ENCODE measurements at regions of chr3 and their contacts with region 1.

Region 1: DNA sequence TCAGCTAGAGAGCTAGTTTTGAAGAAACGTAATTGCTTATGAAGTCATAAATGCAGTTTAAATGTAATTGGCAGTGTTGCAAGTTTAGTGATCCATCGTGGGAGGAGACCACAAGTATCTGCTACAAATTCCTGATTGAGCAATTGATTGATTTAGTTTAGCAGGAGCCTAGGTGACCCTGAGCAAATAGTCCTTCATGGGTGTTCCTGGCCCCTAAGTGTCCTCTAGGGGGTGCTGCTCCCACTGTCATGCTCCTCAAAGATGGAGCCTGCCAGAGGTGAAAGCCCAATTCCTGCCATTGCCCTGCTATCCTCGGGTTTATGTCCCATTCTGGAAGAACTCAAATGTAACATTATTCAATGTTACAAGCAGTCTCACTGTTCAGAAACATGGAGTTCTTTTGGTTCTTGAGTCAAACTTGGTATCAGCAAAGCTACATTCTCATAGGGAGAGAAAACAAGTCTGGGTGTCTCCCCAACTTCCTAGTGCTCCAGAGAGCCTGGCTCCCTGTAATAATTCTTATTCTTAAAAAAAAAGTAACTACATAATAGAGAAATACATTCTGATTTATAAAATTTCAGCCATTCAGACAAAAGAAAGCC is 29.8 kb upstream of the SENP5 start:
- DNase-seq: peak; percentile 65 to 86 (median 75)
- H3K4me3 ChIP-seq: no peak overlapping the region
- H3K27ac ChIP-seq: no peak overlapping the region
- H3K4me1 ChIP-seq: no peaks in the 10 kb centered on the region
- H3K27me3 ChIP-seq: no peaks in the 10 kb centered on the region
- CTCF ChIP-seq: peak; percentile 57 to 78 (median 72)
- POLR2A ChIP-seq: no peak

Region 2: DNA sequence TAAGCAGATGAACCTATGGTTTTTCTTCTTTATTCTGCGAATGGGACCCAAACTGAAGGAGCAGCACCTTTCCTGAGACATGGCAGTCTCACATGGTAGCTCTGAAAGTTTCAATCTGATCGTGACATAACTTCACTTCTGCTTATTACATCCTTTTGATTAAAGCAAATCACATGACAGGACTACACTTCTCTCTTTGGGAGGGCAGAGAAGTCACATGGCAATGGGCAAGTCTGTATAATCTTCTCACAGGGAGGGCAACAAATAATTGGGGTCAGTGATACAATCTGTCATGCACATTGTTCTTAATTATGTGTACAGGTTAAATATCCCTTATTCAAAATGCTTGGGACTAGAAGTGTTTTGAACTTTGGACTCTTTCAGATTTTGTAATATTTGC is 82.8 kb after region 1 on chr3:
- intact Hi-C with region 1: no loop called
- DNase-seq: no peak
- H3K4me3 ChIP-seq: no peak overlapping the region
- H3K27ac ChIP-seq: no peak overlapping the region
- H3K4me1 ChIP-seq: peaks cover 0 to 4% of the 10 kb centered on the region in 2 donors
- H3K27me3 ChIP-seq: no peaks in the 10 kb centered on the region
- CTCF ChIP-seq: no peak
- POLR2A ChIP-seq: no peak

Region 3: DNA sequence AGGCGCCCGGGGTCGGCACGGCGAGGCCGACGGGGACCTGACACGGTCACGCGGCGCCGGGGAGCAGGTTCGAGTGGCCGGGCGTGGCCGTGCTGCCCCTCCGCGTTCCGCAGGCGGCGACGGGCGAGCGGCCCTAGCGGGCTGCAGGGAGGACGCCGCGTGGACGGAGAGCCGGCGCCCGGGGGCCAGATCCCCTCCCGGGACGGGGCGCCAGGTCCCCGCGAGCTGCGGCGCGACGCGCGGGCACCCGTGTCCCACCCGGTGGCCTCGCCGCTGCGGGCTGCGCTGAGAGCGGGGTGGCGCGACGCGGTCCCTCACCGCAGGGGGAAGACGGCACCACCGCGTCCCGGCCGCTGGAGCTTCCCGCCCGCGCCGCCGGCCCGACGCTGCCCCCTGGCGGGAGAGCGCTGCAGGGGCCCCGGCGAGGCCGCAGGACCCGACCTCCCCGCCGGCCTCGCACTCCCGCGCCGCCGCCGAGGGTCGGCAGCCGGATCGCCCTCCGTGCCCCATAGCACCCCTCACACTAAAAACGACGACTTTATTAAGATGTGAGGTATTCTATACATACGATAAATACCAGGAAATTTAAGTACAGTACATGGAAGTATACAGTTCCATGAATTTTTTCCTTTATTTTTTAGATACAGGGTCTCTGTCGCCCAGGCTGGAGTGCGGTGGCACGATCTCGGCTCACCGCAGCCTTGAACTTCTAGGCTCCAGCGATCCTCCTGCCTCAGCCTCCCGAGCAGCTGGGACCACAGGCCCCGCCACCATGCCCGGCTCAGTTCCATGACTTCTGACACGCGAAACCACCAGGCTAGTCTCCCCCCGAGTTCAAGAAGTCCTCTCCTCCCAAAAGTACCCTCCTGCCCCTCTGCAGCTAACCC is 132.0 kb after region 1 on chr3:
- intact Hi-C with region 1: loop called (anchors 5 to 10 kb)
- DNase-seq: peak in 6 of 7 donors; percentile 40 to 67 (median 56)
- H3K4me3 ChIP-seq: peak overlapping the region in 3 of 4 donors; percentile 45 to 96 (median 50)
- H3K27ac ChIP-seq: peak overlapping the region in 2 of 5 donors; percentile 41 to 72
- H3K4me1 ChIP-seq: peaks cover 3 to 9% of the 10 kb centered on the region in 2 donors
- H3K27me3 ChIP-seq: no peaks in the 10 kb centered on the region
- CTCF ChIP-seq: peak in 3 of 6 experiments; percentile 92 to 97 (median 93)
- POLR2A ChIP-seq: no peak

Measured in adrenal gland (tissue), 19 donors.